ENCODE measurements at regions of chr15 and their contacts with region 1.

Region 1: DNA sequence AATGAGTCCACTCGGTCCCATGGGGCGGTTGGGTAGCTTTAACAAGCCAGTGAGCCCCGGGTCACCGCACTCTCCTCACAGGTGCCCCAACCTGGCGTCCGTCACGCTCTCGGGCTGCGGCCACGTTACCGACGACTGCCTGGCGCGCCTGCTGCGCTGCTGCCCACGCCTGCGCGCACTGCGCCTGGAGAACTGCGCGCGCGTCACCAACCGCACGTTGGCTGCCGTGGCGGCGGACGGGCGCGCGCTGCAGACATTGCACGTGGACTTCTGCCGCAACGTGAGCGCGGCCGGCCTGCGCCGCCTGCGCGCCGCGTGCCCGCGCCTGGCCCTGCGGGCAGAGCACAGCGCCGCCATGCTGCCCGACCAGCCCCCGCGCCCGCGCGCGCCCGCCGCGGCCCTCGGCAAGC is 3.4 kb downstream of the FBXL22 start:
- DNase-seq: peak; percentile 86 to 95 (median 91)
- ATAC-seq: peak; percentile 18 to 83 (median 64)
- H3K4me3 ChIP-seq: peak overlapping the region; percentile 30 to 83 (median 65)
- H3K27ac ChIP-seq: peak overlapping the region; percentile 14 to 95 (median 88)
- H3K4me1 ChIP-seq: peaks cover 0 to 75% (median 46%) of the 10 kb centered on the region in 12 donors
- H3K27me3 ChIP-seq: no peaks in the 10 kb centered on the region
- CTCF ChIP-seq: peak in 4 of 12 donors; percentile 20 to 41 (median 34)
- POLR2A ChIP-seq: peak in 1 of 2 donors; percentile 76

Region 2: DNA sequence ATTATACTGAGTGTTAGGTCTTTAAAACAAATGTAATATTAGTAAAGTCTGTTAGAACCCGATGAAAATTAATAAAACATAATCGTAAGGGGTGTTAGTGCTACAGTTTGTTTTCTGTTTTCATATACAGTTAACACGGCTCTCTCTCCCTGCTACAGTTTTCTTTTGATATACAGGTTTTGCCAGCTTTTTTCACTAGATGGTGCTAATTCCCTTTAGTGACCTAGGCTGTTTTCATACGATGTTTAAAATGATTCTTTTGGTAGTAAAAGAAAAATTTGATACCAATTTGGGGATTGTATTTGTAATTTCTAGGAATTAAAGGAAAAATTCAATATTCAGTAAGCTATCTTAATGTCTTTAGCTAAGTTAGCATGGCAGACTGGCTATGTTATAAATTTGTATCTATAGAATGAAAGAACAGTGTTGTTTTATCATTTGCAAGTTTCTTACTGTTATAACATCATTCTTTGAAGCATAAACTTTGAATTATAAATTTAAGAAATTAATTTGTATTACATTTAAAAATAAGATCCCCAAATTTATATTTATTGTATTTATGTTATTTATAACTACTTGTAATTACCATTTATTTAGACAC is 311.7 kb before region 1 on chr15:
- intact Hi-C with region 1: loop called in 4 of 10 experiments (anchors 5 to 10 kb)
- DNase-seq: no peak
- ATAC-seq: peak in 3 of 4 donors; percentile 53 to 62 (median 61)
- H3K4me3 ChIP-seq: no peak overlapping the region
- H3K27ac ChIP-seq: no peak overlapping the region
- H3K4me1 ChIP-seq: peaks cover 0 to 25% (median 3%) of the 10 kb centered on the region in 12 donors
- H3K27me3 ChIP-seq: no peaks in the 10 kb centered on the region
- CTCF ChIP-seq: peak; percentile 47 to 81 (median 72)
- POLR2A ChIP-seq: no peak

Region 3: DNA sequence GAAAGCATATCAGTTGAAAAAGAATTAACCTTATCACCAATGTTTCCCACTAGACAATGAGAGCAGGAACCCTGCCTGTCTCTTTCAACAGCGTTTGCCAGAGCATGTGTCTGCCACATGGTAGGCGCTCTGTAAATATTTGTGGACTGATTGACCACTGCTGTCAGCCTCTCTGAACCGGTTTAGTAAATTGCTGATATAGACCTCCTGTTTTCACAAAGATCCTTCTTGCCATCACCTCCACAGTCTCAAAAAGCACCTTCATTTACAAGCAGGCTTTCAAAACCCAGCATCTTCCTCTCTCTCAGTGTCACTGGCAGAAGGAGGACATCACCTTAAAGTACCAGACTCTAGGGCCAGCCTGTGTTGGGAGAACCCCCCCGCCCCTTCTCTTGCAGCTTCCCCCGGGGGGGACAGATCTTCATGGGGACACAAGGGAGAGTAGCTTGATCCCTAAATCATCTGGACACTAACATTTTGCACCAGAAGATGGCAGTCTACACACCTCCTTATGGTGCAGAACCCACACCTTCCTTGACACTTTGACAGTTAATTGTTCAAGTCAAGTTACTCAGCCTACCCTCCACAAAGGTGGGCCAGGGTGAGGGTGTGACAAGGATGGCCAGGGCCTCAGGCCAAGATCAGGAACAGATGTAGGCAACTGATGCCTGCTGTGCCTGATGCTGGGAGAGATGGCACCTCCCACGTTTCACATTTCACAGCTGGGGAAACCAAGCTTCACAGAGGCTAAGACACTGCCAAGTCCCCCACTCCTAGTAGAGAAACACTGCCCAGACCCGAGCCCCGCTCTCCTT is 134.0 kb before region 1 on chr15:
- intact Hi-C with region 1: loop called in 7 of 10 experiments (anchors 1 to 5 kb)
- DNase-seq: peak in 2 of 5 donors; percentile 25 to 32
- ATAC-seq: peak; percentile 44 to 85 (median 82)
- H3K4me3 ChIP-seq: no peak overlapping the region
- H3K27ac ChIP-seq: no peak overlapping the region
- H3K4me1 ChIP-seq: peaks cover 0 to 11% (median under 1%) of the 10 kb centered on the region in 12 donors
- H3K27me3 ChIP-seq: no peaks in the 10 kb centered on the region
- CTCF ChIP-seq: peak; percentile 46 to 71 (median 59)
- POLR2A ChIP-seq: no peak

Region 4: DNA sequence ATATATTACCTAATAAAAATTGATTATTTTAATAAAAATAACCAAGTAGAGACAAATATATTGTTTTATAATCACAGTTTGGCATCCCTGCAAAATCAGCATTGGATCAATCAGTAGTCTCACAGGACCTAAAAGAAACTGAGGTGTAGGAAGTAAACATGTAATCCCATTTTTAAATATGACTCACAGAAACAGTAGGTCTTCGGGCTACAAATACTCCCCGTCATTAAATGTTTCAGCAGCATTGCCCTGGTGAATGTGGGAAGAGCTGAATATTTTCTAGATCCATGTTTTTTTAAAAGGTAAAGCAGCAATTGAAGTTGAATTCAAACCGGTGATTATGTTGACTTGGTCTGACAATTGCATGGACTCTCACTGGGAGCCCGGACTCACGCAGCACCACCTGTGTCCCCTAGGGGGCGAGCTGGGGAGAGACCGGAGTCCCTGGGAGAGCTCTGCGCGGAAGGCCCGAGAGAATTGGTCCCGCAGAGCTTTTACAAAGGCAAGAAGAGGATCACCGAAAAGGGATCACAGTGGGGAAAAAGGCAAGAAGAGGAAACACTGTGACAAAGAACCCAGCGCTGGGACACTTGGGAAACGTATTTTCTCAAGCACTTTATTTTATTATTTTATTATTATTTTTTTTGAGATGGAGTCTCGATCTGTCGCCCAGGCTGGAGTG is 113.4 kb before region 1 on chr15:
- intact Hi-C with region 1: loop called in 5 of 10 experiments (anchors 5 kb)
- DNase-seq: peak; percentile 86 to 95 (median 88)
- ATAC-seq: peak; percentile 88 to 95 (median 92)
- H3K4me3 ChIP-seq: peak overlapping the region in 2 of 12 donors; percentile 5 to 19
- H3K27ac ChIP-seq: peak overlapping the region in 1 of 12 donors; percentile 66
- H3K4me1 ChIP-seq: peaks cover 0 to 66% (median 0%) of the 10 kb centered on the region in 12 donors
- H3K27me3 ChIP-seq: no peaks in the 10 kb centered on the region
- CTCF ChIP-seq: peak; percentile 88 to 97 (median 95)
- POLR2A ChIP-seq: no peak